Activated B cell treated with CpG ODN at 0.5 μM for 24 hours (primary cell): ENCODE measurements at regions of chr3 and their contacts with region 1.

Region 1: GRCh38 chr3:10703875-10704274 is 112.2 kb upstream of the SLC6A11 start:
- DNase-seq: no peak
- ATAC-seq: no peak
- H3K4me3 Mint-ChIP-seq: no peak overlapping the region
- H3K27ac Mint-ChIP-seq: no peak overlapping the region
- H3K4me1 Mint-ChIP-seq: peaks cover 7% of the 10 kb centered on the region
- H3K27me3 Mint-ChIP-seq: peaks cover 63% of the 10 kb centered on the region
- CTCF ChIP-seq: no peak

Region 2: DNA sequence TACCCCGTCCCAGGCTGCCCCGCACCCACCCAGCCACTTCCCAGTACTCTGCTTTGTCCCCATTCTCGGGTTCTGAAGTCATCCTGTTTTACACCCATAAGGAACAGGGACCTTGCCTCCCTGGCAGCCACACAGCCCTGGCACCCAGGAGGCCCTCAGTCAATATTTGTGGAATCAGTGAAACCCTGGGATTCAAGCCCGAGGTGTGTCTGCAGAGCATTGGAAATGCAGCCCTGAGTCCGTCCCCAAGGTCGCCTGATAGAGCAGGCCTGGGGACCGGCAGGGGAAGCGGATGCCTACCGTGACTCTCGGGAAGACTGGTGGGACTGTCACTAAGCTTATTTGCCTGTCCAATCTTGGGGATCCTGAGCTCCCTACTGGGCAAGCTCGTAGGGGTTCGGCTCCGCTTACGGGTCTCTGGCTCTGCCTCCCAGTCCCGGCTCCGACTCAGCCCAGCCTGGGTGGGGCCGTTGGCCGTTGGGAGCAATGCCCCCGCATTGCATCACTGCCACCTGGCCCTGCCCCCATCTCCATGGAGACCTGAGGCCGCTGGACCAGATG is 1207.2 kb after region 1 on chr3:
- CTCF ChIA-PET with region 1: no interaction called
- POLR2A ChIA-PET with region 1: no interaction called
- intact Hi-C with region 1: loop called (anchors 10 kb)
- DNase-seq: no peak
- ATAC-seq: no peak
- H3K4me3 Mint-ChIP-seq: no peak overlapping the region
- H3K27ac Mint-ChIP-seq: no peak overlapping the region
- H3K4me1 Mint-ChIP-seq: no peaks in the 10 kb centered on the region
- H3K27me3 Mint-ChIP-seq: peaks cover 2% of the 10 kb centered on the region
- CTCF ChIP-seq: no peak